HCT116 (cell line): ENCODE measurements at regions of chr18 and their contacts with region 1.

Region 1: GRCh38 chr18:1585879-1586488 is 681.3 kb downstream of the ADCYAP1 start:
- DNase-seq: peak; percentile 32
- ATAC-seq: peak; percentile 78
- H3K4me3 ChIP-seq: no peak overlapping the region
- H3K27ac ChIP-seq: no peak overlapping the region
- H3K4me1 ChIP-seq: no peaks in the 10 kb centered on the region
- H3K27me3 ChIP-seq: 0 out of 2 replicates have a peak, but pooled peaks cover 6% of the 10 kb centered on the region
- CTCF ChIP-seq: peak; percentile 24 to 62 (median 34); a peak in 4 of 6 replicates
- POLR2A ChIP-seq: no peak
- RAD21 ChIP-seq: peak; percentile 48

Region 2: DNA sequence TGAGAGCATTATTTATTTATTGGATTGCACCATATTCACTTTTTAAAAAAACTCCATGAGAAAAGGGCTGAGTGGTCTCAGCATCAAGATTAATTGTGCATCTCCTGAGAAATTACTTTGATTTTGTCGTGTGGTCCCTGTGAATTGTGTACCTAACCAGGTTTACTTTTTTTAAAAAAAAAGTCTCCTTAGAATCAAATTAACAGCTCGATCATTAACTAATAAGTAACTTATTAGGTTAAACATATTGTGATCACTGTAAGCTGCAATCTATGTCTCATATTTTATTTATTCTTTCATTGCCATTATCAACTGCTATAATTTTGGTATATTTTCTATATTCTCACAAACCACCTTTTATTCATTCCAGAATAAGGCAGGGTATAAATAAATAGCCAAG is 363.1 kb before region 1 on chr18:
- CTCF ChIA-PET with region 1: no interaction called
- POLR2A ChIA-PET with region 1: no interaction called
- RAD21 ChIA-PET with region 1: no interaction called
- intact Hi-C with region 1: no loop called
- DNase-seq: no peak
- ATAC-seq: no peak
- H3K4me3 ChIP-seq: no peak overlapping the region
- H3K27ac ChIP-seq: no peak overlapping the region
- H3K4me1 ChIP-seq: no peaks in the 10 kb centered on the region
- H3K27me3 ChIP-seq: peaks cover 5% of the 10 kb centered on the region; the same call in 1 of the 2 replicates
- CTCF ChIP-seq: no peak
- POLR2A ChIP-seq: no peak
- RAD21 ChIP-seq: no peak

Region 3: GRCh38 chr18:2083691-2084090 is 497.7 kb after region 1 on chr18:
- CTCF ChIA-PET with region 1: interaction called, 11 read pairs
- POLR2A ChIA-PET with region 1: no interaction called
- RAD21 ChIA-PET with region 1: no interaction called
- intact Hi-C with region 1: loop called (anchors 10 kb)
- DNase-seq: no peak
- ATAC-seq: peak; percentile 71
- H3K4me3 ChIP-seq: no peak overlapping the region
- H3K27ac ChIP-seq: no peak overlapping the region
- H3K4me1 ChIP-seq: no peaks in the 10 kb centered on the region
- H3K27me3 ChIP-seq: no peaks in the 10 kb centered on the region
- CTCF ChIP-seq: peak; percentile 34 to 60 (median 56); a peak in 4 of 6 replicates
- POLR2A ChIP-seq: no peak
- RAD21 ChIP-seq: peak; percentile 67

Region 4: GRCh38 chr18:2540575-2540974 is 954.6 kb after region 1 on chr18:
- CTCF ChIA-PET with region 1: interaction called, 9 read pairs
- POLR2A ChIA-PET with region 1: no interaction called
- RAD21 ChIA-PET with region 1: no interaction called
- intact Hi-C with region 1: loop called (anchors 5 kb)
- DNase-seq: no peak
- ATAC-seq: no peak
- H3K4me3 ChIP-seq: no peak overlapping the region
- H3K27ac ChIP-seq: no peak overlapping the region
- H3K4me1 ChIP-seq: no peaks in the 10 kb centered on the region
- H3K27me3 ChIP-seq: no peaks in the 10 kb centered on the region
- CTCF ChIP-seq: no peak
- POLR2A ChIP-seq: no peak
- RAD21 ChIP-seq: no peak